Sigmoid colon (tissue), 7 donors: ENCODE measurements at regions of chr7 and their contacts with region 1.

Region 1: GRCh38 chr7:50679218-50680007 is 103.3 kb downstream of the GRB10 start:
- DNase-seq: no peak
- H3K4me3 ChIP-seq: no peak overlapping the region
- H3K27ac ChIP-seq: peak overlapping the region in 3 of 4 donors; percentile 76 to 91 (median 87)
- H3K4me1 ChIP-seq: peaks cover 0 to 87% (median 81%) of the 10 kb centered on the region in 4 donors
- H3K27me3 ChIP-seq: no peaks in the 10 kb centered on the region
- CTCF ChIP-seq: peak in 3 of 4 experiments; percentile 28 to 39 (median 36)
- EP300 ChIP-seq: no peak
- POLR2A ChIP-seq: no peak

Region 2: DNA sequence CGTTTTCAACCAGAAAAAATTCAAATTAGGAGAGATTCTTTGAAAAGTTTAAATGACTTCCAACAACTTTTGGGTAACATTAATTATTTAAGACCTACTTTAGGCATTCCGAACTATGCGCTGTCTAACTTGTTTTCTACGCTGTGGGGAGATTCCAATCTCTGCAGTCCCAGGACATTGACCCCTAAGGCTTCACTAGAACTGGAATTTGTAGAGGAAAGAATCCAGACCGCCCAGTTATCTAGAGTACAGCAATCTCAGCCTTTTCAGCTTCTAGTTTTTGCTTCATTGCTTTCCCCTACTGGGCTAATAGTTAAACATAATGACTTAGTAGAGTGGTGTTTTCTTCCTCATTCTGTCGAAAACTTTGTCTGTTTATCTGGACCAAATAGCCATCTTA is 99.4 kb before region 1 on chr7:
- intact Hi-C with region 1: no loop called
- DNase-seq: no peak
- H3K4me3 ChIP-seq: no peak overlapping the region
- H3K27ac ChIP-seq: no peak overlapping the region
- H3K4me1 ChIP-seq: peaks cover 0 to 8% (median 7%) of the 10 kb centered on the region in 4 donors
- H3K27me3 ChIP-seq: no peaks in the 10 kb centered on the region
- CTCF ChIP-seq: no peak
- EP300 ChIP-seq: no peak
- POLR2A ChIP-seq: no peak

Region 3: GRCh38 chr7:50595491-50596102 is 83.8 kb before region 1 on chr7:
- intact Hi-C with region 1: loop called (anchors 5 kb)
- DNase-seq: no peak
- H3K4me3 ChIP-seq: no peak overlapping the region
- H3K27ac ChIP-seq: peak overlapping the region in 1 of 4 donors; percentile 7
- H3K4me1 ChIP-seq: peaks cover 0 to 3% (median 1%) of the 10 kb centered on the region in 4 donors
- H3K27me3 ChIP-seq: no peaks in the 10 kb centered on the region
- CTCF ChIP-seq: peak in 3 of 4 experiments; percentile 30 to 73 (median 54)
- EP300 ChIP-seq: no peak
- POLR2A ChIP-seq: no peak